PC-9 (cell line): ENCODE measurements at regions of chr3 and their contacts with region 1.

Region 1: DNA sequence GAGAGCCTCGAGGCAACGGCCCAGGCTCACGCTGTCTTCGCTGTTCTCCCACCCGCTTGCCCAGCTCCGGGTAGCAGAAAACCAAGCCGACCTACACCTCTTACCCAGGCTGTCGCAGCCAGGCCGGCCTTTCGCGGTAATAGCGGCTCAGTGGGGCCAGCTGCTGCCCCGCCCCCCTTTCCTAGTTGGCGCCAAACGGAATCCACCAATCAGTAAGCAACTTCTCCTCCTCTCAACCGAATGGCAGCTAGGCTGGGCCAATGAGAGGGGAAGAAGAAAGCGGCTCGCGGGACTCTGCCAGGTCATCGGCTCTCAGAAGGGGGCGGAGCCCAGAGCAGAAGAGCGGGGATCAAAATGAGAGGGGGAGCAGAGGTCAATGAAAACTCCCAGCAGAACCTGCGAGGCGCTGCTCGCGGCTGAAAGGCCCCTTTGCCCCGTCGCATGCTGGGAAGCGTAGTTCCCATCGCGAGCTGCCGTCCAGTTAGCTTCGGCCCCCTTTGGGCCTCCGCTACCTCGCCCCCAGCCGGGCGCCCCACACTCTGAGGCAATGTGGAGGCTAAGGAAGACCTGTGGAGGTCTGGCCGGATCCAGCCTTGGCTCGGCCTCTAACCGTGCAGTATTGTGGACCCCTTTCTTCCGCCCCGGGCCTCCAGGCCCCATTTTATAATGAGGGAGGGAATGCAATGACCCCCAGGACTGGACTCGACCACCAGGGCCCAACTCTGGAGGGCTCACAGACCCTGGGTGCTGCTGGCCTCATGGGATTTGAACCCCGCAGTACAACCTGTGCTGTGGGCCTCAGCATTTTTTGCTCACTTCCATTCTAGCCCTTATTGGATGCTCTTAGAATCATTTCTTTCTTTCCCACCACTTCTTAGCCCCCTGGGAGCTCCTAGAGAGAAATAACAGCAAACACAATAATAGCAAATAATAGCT is at the start of gene CDC25A:
- DNase-seq: peak; percentile 96
- H3K4me3 ChIP-seq: peak within 1 kb of the TSS; percentile 87
- H3K27ac ChIP-seq: no peak within 1 kb of the TSS
- H3K4me1 ChIP-seq: peaks cover 10% of the 10 kb centered on the region; the same call in 1 of the 2 replicates
- H3K27me3 ChIP-seq: no peaks in the 10 kb centered on the region
- CTCF ChIP-seq: no peak
- total RNA-seq, gene CDC25A: 9.7 and 10.5 TPM in 2 replicates

Region 2: GRCh38 chr3:48273594-48274211 is 85.2 kb after region 1 on chr3:
- CTCF ChIA-PET with region 1: no interaction called
- POLR2A ChIA-PET with region 1: interaction called, 10 read pairs
- intact Hi-C with region 1: no loop called
- DNase-seq: peak; percentile 44 to 53
- H3K4me3 ChIP-seq: no peak overlapping the region
- H3K27ac ChIP-seq: no peak overlapping the region
- H3K4me1 ChIP-seq: peaks cover 19% of the 10 kb centered on the region
- H3K27me3 ChIP-seq: no peaks in the 10 kb centered on the region
- CTCF ChIP-seq: peak; percentile 81